CD14-positive monocyte (primary cell): ENCODE measurements at regions of chr3 and their contacts with region 1.

Region 1: GRCh38 chr3:153284282-153284938 is 122.4 kb downstream of the RAP2B start:
- DNase-seq: peak; percentile 84 to 94 (median 91)
- H3K4me3 ChIP-seq: no peak overlapping the region
- H3K4me3 Mint-ChIP-seq: peak overlapping the region in 1 of 2 donors; percentile 5
- H3K27ac ChIP-seq: peak overlapping the region; percentile 70 to 90
- H3K27ac Mint-ChIP-seq: peak overlapping the region; percentile 89 to 97 (median 95)
- H3K4me1 ChIP-seq: peaks cover 35 to 45% of the 10 kb centered on the region in 2 donors
- H3K4me1 Mint-ChIP-seq: peaks cover 43% of the 10 kb centered on the region
- H3K27me3 ChIP-seq: no peaks in the 10 kb centered on the region
- H3K27me3 Mint-ChIP-seq: peaks cover 0 to 6% (median 0%) of the 10 kb centered on the region in 3 donors
- CTCF ChIP-seq: no peak

Region 2: DNA sequence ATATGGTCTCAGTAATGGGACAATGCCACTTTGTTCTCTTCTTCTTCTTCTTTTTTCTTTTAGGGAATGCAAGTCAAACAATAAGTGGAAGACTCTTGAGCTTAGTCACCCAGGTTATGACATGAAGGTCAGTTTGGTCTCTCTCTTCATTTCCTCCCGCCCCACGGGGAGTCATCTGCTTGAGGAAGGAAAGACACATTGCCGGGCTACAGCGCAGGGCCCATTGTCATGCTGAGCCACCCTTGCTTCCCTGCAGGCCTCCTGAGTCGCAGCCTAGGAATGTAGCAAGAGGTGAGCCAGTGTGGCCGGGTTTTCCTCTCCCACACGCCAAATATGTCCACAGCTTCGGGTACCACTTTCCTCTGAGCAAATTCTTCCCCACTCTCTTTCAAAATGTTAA is 74.8 kb before region 1 on chr3:
- intact Hi-C with region 1: loop called in 1 of 2 experiments (anchors 10 kb)
- DNase-seq: peak; percentile 92 to 98 (median 94)
- H3K4me3 ChIP-seq: peak overlapping the region in 1 of 3 experiments; percentile 43
- H3K4me3 Mint-ChIP-seq: peak overlapping the region; percentile 54 to 64
- H3K27ac ChIP-seq: peak overlapping the region; percentile 65 to 92
- H3K27ac Mint-ChIP-seq: peak overlapping the region; percentile 92 to 99 (median 96)
- H3K4me1 ChIP-seq: peaks cover 38 to 43% of the 10 kb centered on the region in 2 donors
- H3K4me1 Mint-ChIP-seq: peaks cover 45% of the 10 kb centered on the region
- H3K27me3 ChIP-seq: no peaks in the 10 kb centered on the region
- H3K27me3 Mint-ChIP-seq: no peaks in the 10 kb centered on the region
- CTCF ChIP-seq: no peak

Region 3: GRCh38 chr3:153221748-153222162 is 62.7 kb before region 1 on chr3:
- intact Hi-C with region 1: loop called in 1 of 2 experiments (anchors 2 kb)
- DNase-seq: peak; percentile 98 to 100 (median 99)
- H3K4me3 ChIP-seq: peak overlapping the region in 2 of 3 experiments; percentile 20 to 53
- H3K4me3 Mint-ChIP-seq: peak overlapping the region; percentile 41 to 70
- H3K27ac ChIP-seq: peak overlapping the region; percentile 87 to 96
- H3K27ac Mint-ChIP-seq: peak overlapping the region; percentile 97 to 99 (median 98)
- H3K4me1 ChIP-seq: peaks cover 48 to 51% of the 10 kb centered on the region in 2 donors
- H3K4me1 Mint-ChIP-seq: peaks cover 50% of the 10 kb centered on the region
- H3K27me3 ChIP-seq: no peaks in the 10 kb centered on the region
- H3K27me3 Mint-ChIP-seq: peaks cover 0 to 2% (median 2%) of the 10 kb centered on the region in 3 donors
- CTCF ChIP-seq: no peak

Region 4: GRCh38 chr3:153246806-153247205 is 37.6 kb before region 1 on chr3:
- intact Hi-C with region 1: loop called in 1 of 2 experiments (anchors 5 kb)
- DNase-seq: peak; percentile 32 to 64 (median 49)
- H3K4me3 ChIP-seq: peak overlapping the region in 1 of 3 experiments; percentile 34
- H3K4me3 Mint-ChIP-seq: no peak overlapping the region
- H3K27ac ChIP-seq: peak overlapping the region in 1 of 2 donors; percentile 93
- H3K27ac Mint-ChIP-seq: peak overlapping the region; percentile 91 to 98 (median 95)
- H3K4me1 ChIP-seq: peaks cover 69 to 87% of the 10 kb centered on the region in 2 donors
- H3K4me1 Mint-ChIP-seq: peaks cover 64% of the 10 kb centered on the region
- H3K27me3 ChIP-seq: no peaks in the 10 kb centered on the region
- H3K27me3 Mint-ChIP-seq: peaks cover 0 to 1% (median 0%) of the 10 kb centered on the region in 3 donors
- CTCF ChIP-seq: no peak